MCF 10A (cell line): ENCODE measurements at regions of chr5 and their contacts with region 1.

Region 1: DNA sequence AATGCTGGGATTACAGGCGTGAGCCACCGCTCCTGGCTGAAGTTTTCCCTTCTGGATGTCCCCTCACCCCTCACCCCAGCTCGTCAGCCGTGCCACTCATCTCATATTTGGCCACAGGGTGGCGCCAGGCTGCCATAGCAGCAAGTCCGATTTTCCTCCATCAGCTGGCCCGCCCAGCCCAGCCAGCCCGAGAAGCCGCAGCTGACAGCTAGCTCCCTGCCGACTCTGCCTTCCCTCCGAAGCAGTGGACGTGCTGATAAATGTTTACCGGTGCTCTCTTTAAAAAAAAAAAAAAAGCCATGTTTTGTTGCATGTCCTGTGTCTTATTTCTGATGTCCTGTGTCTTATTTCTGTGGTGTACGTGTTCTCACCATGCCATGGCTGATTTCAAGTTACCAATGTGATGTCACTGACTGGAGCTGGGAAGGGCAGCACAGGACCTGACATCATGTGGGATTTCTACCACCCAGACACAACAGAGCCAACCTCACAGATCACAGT is 58.3 kb downstream of the PFDN1 start:
- DNase-seq: peak; percentile 91
- H3K4me3 Mint-ChIP-seq: no peak overlapping the region
- H3K27ac Mint-ChIP-seq: no peak overlapping the region
- H3K4me1 Mint-ChIP-seq: peaks cover 36% of the 10 kb centered on the region
- H3K27me3 Mint-ChIP-seq: no peaks in the 10 kb centered on the region
- CTCF ChIP-seq: peak; percentile 94

Region 2: GRCh38 chr5:140220032-140220697 is 24.4 kb before region 1 on chr5:
- CTCF ChIA-PET with region 1: interaction called, 16 read pairs
- POLR2A ChIA-PET with region 1: interaction called, 4 read pairs
- intact Hi-C with region 1: no loop called
- DNase-seq: no peak
- H3K4me3 Mint-ChIP-seq: no peak overlapping the region
- H3K27ac Mint-ChIP-seq: no peak overlapping the region
- H3K4me1 Mint-ChIP-seq: peaks cover 42% of the 10 kb centered on the region
- H3K27me3 Mint-ChIP-seq: no peaks in the 10 kb centered on the region
- CTCF ChIP-seq: no peak

Region 3: DNA sequence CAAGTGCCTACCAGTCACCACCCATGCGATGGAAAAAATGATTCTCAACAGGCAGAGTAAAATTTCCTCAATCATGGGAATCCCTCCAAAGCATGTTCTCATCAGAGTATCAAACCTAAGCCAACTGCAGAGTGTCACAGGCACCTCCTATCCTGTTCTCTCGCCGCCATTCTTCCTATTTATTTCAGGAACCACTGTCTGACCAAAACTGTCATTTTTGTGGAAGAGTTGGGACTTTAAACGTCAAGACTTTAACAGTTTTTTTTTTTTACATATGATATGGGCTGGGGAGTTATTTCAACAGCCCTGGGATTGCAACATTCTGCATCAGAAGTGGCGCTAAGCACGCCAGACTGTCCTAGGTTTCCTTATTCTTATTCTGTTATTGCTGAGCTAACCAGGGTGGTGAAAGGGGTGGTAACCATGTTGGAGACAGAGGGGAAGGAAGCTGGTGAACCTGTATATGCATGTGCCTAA is 28.9 kb after region 1 on chr5:
- CTCF ChIA-PET with region 1: interaction called, 12 read pairs
- POLR2A ChIA-PET with region 1: no interaction called
- intact Hi-C with region 1: no loop called
- DNase-seq: peak; percentile 55
- H3K4me3 Mint-ChIP-seq: no peak overlapping the region
- H3K27ac Mint-ChIP-seq: no peak overlapping the region
- H3K4me1 Mint-ChIP-seq: no peaks in the 10 kb centered on the region
- H3K27me3 Mint-ChIP-seq: no peaks in the 10 kb centered on the region
- CTCF ChIP-seq: no peak

Region 4: DNA sequence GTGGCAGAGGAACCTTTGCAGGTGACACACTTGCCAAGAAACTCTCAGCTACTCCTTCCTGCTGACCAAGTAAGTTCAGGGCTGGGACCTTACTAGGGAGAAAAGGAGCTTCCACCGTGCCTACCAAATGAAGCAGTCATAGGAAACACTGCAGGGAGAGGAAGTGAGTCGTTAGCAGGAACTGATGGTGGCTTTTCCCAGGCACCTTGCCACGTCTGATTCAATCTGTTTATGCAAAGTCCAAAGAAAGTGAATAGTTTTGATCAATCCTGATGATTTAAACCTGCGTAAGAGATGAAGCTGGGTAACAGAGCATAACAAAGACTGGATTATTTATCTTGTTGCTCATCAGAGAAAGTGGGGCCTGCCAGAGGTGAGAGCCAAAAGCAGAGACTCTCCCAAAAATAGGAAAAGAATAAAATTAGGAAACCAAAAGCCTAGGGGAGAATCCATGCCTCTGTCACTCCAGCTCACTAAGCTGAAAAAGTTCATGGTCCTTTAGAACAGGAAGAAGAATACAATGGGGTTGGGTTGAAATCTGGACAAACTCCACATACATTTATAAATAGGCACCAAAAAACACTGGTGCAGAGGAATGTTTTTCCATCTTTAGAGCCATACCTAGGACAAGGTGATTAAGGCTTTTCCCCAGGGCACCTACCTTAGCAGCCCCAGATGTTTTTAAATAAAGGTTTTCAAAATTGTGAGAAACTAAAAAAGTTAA is 67.7 kb after region 1 on chr5:
- CTCF ChIA-PET with region 1: interaction called, 31 read pairs
- POLR2A ChIA-PET with region 1: interaction called, 6 read pairs
- intact Hi-C with region 1: no loop called
- DNase-seq: peak; percentile 95
- H3K4me3 Mint-ChIP-seq: no peak overlapping the region
- H3K27ac Mint-ChIP-seq: peak overlapping the region; percentile 60
- H3K4me1 Mint-ChIP-seq: peaks cover 22% of the 10 kb centered on the region
- H3K27me3 Mint-ChIP-seq: no peaks in the 10 kb centered on the region
- CTCF ChIP-seq: no peak

Region 5: DNA sequence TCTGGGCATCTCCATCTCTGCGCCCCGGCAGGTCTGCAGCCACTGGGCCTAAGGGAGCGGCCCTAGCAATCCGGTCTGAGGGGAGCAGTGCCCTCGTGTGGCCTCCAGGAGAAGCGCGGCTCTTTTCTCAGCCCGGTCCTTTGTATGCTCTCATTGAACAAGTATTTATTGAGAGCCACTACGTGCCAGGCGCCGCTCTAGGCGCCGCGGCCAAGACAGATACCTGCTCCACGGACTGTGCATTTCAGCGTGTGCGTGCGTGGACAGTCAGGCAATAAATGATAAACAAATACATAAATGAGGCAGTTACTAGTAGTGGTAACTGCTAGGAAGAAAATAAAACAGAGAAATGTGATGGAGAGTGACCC is 113.1 kb after region 1 on chr5:
- CTCF ChIA-PET with region 1: interaction called, 1,450 read pairs
- POLR2A ChIA-PET with region 1: interaction called, 12 read pairs
- intact Hi-C with region 1: loop called (anchors 1 kb)
- DNase-seq: peak; percentile 91
- H3K4me3 Mint-ChIP-seq: peak overlapping the region; percentile 33
- H3K27ac Mint-ChIP-seq: no peak overlapping the region
- H3K4me1 Mint-ChIP-seq: peaks cover 8% of the 10 kb centered on the region
- H3K27me3 Mint-ChIP-seq: no peaks in the 10 kb centered on the region
- CTCF ChIP-seq: peak; percentile 97

Region 6: DNA sequence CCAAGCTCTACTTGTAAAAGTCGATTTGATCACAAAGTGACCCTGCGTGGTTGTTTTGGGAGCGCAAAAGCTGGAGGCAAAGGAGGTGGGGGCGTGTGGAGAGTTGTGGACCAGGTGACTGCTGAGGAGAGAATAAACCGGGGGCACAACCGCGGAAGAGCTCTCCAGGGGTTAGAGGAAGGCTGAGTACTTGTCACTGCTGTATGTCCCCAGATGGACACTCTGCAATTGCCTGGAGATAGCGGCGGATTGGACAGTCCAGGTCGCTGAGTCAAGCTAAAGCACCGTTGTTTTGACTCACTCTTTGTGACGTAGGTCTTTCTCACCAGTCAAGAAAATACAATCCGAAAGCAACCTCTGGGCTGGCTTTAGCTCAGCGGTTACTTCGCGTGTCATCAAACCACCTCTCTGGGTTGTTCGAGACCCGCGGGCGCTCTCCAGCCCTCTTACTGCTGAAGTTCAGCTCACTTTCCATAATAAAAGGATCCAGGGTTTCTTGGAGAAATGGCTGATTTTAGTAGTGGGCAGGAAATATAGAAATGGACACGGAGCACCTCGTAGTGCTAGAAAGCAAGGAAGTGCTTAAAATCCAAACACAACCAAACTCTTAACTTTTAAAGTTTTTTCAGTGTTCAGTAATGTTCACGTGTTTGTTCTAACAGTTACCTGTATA is 481.4 kb after region 1 on chr5:
- CTCF ChIA-PET with region 1: no interaction called
- POLR2A ChIA-PET with region 1: no interaction called
- intact Hi-C with region 1: loop called (anchors 5 kb)
- DNase-seq: peak; percentile 99
- H3K4me3 Mint-ChIP-seq: peak overlapping the region; percentile 72
- H3K27ac Mint-ChIP-seq: peak overlapping the region; percentile 42
- H3K4me1 Mint-ChIP-seq: peaks cover 6% of the 10 kb centered on the region
- H3K27me3 Mint-ChIP-seq: no peaks in the 10 kb centered on the region
- CTCF ChIP-seq: no peak